Activated CD4-positive, alpha-beta T cell treated with anti-CD3 and anti-CD28 coated beads, Interleukin-2, amount 10 ng/mL, durations not matched to agents 7 days and 5 days (primary cell): ENCODE measurements at regions of chr6 and their contacts with region 1.

Region 1: DNA sequence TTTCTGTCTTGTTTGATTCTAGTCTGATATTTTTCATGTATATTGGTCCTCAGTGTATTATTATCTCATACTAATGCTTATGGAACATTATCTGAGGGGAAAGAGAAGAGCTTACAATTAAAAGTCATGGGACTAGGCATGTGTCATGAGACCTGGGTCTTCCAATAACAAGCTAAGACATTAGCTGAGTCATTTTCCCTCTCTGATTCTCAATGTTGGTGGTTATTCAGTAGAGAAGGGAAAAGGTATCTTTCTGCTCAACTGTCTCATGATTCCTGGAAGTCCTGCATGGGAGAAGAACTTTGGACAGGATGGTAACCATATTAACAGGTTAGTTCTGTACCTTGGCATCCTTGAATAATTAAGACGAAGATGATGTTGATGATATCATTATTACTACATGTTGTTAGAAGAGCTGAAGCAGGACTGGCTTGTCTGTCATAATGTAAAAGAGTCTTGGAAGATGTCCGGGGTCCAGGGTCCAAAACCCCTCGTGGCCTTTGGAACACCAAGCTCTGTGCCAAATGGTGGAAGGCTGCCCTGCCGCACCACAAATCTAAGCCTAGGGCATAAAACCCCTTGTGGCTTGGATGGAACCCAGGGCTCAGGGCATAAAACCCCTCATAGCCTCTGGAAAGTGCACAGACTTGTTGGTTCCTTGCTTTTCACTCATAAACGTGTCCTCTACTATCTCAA is 19.1 kb downstream of the TRIM38 start:
- DNase-seq: no peak
- H3K4me3 Mint-ChIP-seq: no peak overlapping the region
- H3K27ac Mint-ChIP-seq: no peak overlapping the region
- H3K4me1 Mint-ChIP-seq: peaks cover 7% of the 10 kb centered on the region
- H3K27me3 Mint-ChIP-seq: no peaks in the 10 kb centered on the region

Region 2: GRCh38 chr6:25913741-25914140 is 68.0 kb before region 1 on chr6:
- CTCF ChIA-PET with region 1: no interaction called
- POLR2A ChIA-PET with region 1: no interaction called
- DNase-seq: no peak
- H3K4me3 Mint-ChIP-seq: no peak overlapping the region
- H3K27ac Mint-ChIP-seq: no peak overlapping the region
- H3K4me1 Mint-ChIP-seq: peaks cover 1% of the 10 kb centered on the region
- H3K27me3 Mint-ChIP-seq: no peaks in the 10 kb centered on the region

Region 3: DNA sequence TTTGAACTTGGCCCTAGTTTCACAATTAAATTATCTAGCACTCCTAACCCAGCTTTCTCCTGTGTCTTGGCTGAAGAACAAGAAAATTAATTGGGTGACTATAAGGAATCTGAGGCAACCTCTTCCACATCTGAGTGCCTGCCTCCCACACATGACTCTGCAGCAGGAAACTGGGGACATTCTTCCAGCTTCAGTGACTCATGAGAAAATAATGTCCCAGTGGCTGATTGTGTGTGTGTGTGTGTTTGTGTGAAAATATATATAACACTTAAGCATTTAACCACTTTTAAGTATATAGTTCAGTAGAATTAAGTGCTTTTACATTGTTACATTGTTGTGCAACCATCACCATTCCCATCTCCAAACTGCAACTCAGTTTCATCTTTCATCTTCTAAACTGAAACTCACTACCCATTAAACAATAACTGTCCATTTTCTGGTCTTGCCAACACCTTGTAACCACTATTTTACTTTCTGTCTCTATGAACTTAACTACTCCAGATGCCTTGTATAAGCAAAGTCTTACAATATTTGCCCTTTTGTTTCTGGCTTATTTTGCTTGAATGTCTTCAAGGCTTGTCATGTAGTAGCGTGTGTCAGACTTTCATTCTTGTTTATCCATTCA is 10.4 kb before region 1 on chr6:
- CTCF ChIA-PET with region 1: interaction called, 11 read pairs
- POLR2A ChIA-PET with region 1: interaction called, 3 read pairs
- DNase-seq: no peak
- H3K4me3 Mint-ChIP-seq: no peak overlapping the region
- H3K27ac Mint-ChIP-seq: no peak overlapping the region
- H3K4me1 Mint-ChIP-seq: peaks cover 62% of the 10 kb centered on the region
- H3K27me3 Mint-ChIP-seq: no peaks in the 10 kb centered on the region